ENCODE measurements at regions of chr16 and their contacts with region 1.

Region 1: GRCh38 chr16:68085259-68086071 is at the start of gene NFATC3:
- DNase-seq: peak; percentile 98 to 100 (median 99)
- ATAC-seq: peak; percentile 81
- H3K4me3 ChIP-seq: peak within 1 kb of the TSS; percentile 87 to 97
- H3K4me3 Mint-ChIP-seq: peak within 1 kb of the TSS; percentile 85
- H3K27ac ChIP-seq: peak within 1 kb of the TSS; percentile 72 to 91
- H3K27ac Mint-ChIP-seq: peak within 1 kb of the TSS; percentile 98
- H3K4me1 ChIP-seq: peaks cover 64% of the 10 kb centered on the region
- H3K4me1 Mint-ChIP-seq: peaks cover 64% of the 10 kb centered on the region
- H3K27me3 ChIP-seq: no peaks in the 10 kb centered on the region
- H3K27me3 Mint-ChIP-seq: no peaks in the 10 kb centered on the region
- CTCF ChIP-seq: no peak
- total RNA-seq, gene NFATC3: 79.4 to 85.2 TPM

Region 2: GRCh38 chr16:67833418-67834241 is 251.8 kb before region 1 on chr16:
- CTCF ChIA-PET with region 1: no interaction called
- POLR2A ChIA-PET with region 1: interaction called, 5 read pairs
- intact Hi-C with region 1: loop called in 1 of 2 experiments (anchors 2 kb)
- DNase-seq: peak; percentile 84 to 96 (median 93)
- ATAC-seq: peak; percentile 99
- H3K4me3 ChIP-seq: peak overlapping the region; percentile 73 to 86
- H3K4me3 Mint-ChIP-seq: peak overlapping the region; percentile 94
- H3K27ac ChIP-seq: peak overlapping the region; percentile 52 to 59
- H3K27ac Mint-ChIP-seq: peak overlapping the region; percentile 77
- H3K4me1 ChIP-seq: peaks cover 17% of the 10 kb centered on the region
- H3K4me1 Mint-ChIP-seq: peaks cover 14% of the 10 kb centered on the region
- H3K27me3 ChIP-seq: no peaks in the 10 kb centered on the region
- H3K27me3 Mint-ChIP-seq: no peaks in the 10 kb centered on the region
- CTCF ChIP-seq: no peak

Region 3: GRCh38 chr16:67880584-67880983 is 204.9 kb before region 1 on chr16:
- CTCF ChIA-PET with region 1: no interaction called
- POLR2A ChIA-PET with region 1: no interaction called
- intact Hi-C with region 1: no loop called
- DNase-seq: no peak
- ATAC-seq: no peak
- H3K4me3 ChIP-seq: no peak overlapping the region
- H3K4me3 Mint-ChIP-seq: no peak overlapping the region
- H3K27ac ChIP-seq: no peak overlapping the region
- H3K27ac Mint-ChIP-seq: no peak overlapping the region
- H3K4me1 ChIP-seq: peaks cover 5% of the 10 kb centered on the region
- H3K4me1 Mint-ChIP-seq: peaks cover 7% of the 10 kb centered on the region
- H3K27me3 ChIP-seq: no peaks in the 10 kb centered on the region
- H3K27me3 Mint-ChIP-seq: no peaks in the 10 kb centered on the region
- CTCF ChIP-seq: no peak

Region 4: GRCh38 chr16:67968400-67969253 is 116.8 kb before region 1 on chr16 and contains the start of gene SLC12A4:
- CTCF ChIA-PET with region 1: no interaction called
- POLR2A ChIA-PET with region 1: interaction called, 3 read pairs
- intact Hi-C with region 1: loop called in 1 of 2 experiments (anchors 1 kb)
- DNase-seq: peak; percentile 66 to 93 (median 86)
- ATAC-seq: peak; percentile 90
- H3K4me3 ChIP-seq: peak within 1 kb of the TSS; percentile 78 to 97
- H3K4me3 Mint-ChIP-seq: peak within 1 kb of the TSS; percentile 83
- H3K27ac ChIP-seq: peak within 1 kb of the TSS; percentile 44 to 59
- H3K27ac Mint-ChIP-seq: peak within 1 kb of the TSS; percentile 94
- H3K4me1 ChIP-seq: peaks cover 15% of the 10 kb centered on the region
- H3K4me1 Mint-ChIP-seq: peaks cover 21% of the 10 kb centered on the region
- H3K27me3 ChIP-seq: no peaks in the 10 kb centered on the region
- H3K27me3 Mint-ChIP-seq: no peaks in the 10 kb centered on the region
- CTCF ChIP-seq: no peak
- total RNA-seq, gene SLC12A4: 20.1 to 20.7 TPM

Region 5: GRCh38 chr16:68022704-68023522 is 62.6 kb before region 1 on chr16 and contains the starts of genes DDX28 and DUS2:
- CTCF ChIA-PET with region 1: no interaction called
- POLR2A ChIA-PET with region 1: interaction called, 12 read pairs
- intact Hi-C with region 1: no loop called
- DNase-seq: peak; percentile 89 to 98 (median 94)
- ATAC-seq: peak; percentile 95
- H3K4me3 ChIP-seq: peak within 1 kb of the TSS; percentile 92 to 97
- H3K4me3 Mint-ChIP-seq: peak within 1 kb of the TSS; percentile 98
- H3K27ac ChIP-seq: peak within 1 kb of the TSS; percentile 86 to 88
- H3K27ac Mint-ChIP-seq: peak within 1 kb of the TSS; percentile 95
- H3K4me1 ChIP-seq: peaks cover 28% of the 10 kb centered on the region
- H3K4me1 Mint-ChIP-seq: peaks cover 36% of the 10 kb centered on the region
- H3K27me3 ChIP-seq: no peaks in the 10 kb centered on the region
- H3K27me3 Mint-ChIP-seq: no peaks in the 10 kb centered on the region
- CTCF ChIP-seq: no peak
- total RNA-seq, gene DDX28: 18.5 to 20.9 TPM
- total RNA-seq, gene DUS2: 9.5 TPM

Region 6: GRCh38 chr16:68064791-68065365 is 20.6 kb before region 1 on chr16:
- CTCF ChIA-PET with region 1: interaction called, 51 read pairs
- POLR2A ChIA-PET with region 1: interaction called, 86 read pairs
- intact Hi-C with region 1: loop called (anchors 1 to 2 kb)
- DNase-seq: peak; percentile 39 to 86 (median 73)
- ATAC-seq: peak; percentile 82
- H3K4me3 ChIP-seq: no peak overlapping the region
- H3K4me3 Mint-ChIP-seq: no peak overlapping the region
- H3K27ac ChIP-seq: peak overlapping the region in 1 of 2 experiments; percentile 58
- H3K27ac Mint-ChIP-seq: peak overlapping the region; percentile 92
- H3K4me1 ChIP-seq: peaks cover 72% of the 10 kb centered on the region
- H3K4me1 Mint-ChIP-seq: peaks cover 76% of the 10 kb centered on the region
- H3K27me3 ChIP-seq: no peaks in the 10 kb centered on the region
- H3K27me3 Mint-ChIP-seq: no peaks in the 10 kb centered on the region
- CTCF ChIP-seq: peak; percentile 85

Region 7: GRCh38 chr16:68183046-68183445 is 97.6 kb after region 1 on chr16:
- CTCF ChIA-PET with region 1: no interaction called
- POLR2A ChIA-PET with region 1: no interaction called
- intact Hi-C with region 1: no loop called
- DNase-seq: no peak
- ATAC-seq: no peak
- H3K4me3 ChIP-seq: no peak overlapping the region
- H3K4me3 Mint-ChIP-seq: no peak overlapping the region
- H3K27ac ChIP-seq: no peak overlapping the region
- H3K27ac Mint-ChIP-seq: no peak overlapping the region
- H3K4me1 ChIP-seq: no peaks in the 10 kb centered on the region
- H3K4me1 Mint-ChIP-seq: peaks cover 5% of the 10 kb centered on the region
- H3K27me3 ChIP-seq: no peaks in the 10 kb centered on the region
- H3K27me3 Mint-ChIP-seq: no peaks in the 10 kb centered on the region
- CTCF ChIP-seq: no peak

Region 8: GRCh38 chr16:68310761-68311511 is 225.5 kb after region 1 on chr16 and contains the starts of genes PRMT7 and SLC7A6OS:
- CTCF ChIA-PET with region 1: no interaction called
- POLR2A ChIA-PET with region 1: no interaction called
- intact Hi-C with region 1: loop called (anchors 1 to 2 kb)
- DNase-seq: peak; percentile 77 to 96 (median 92)
- ATAC-seq: peak; percentile 97
- H3K4me3 ChIP-seq: peak within 1 kb of the TSS; percentile 84 to 92
- H3K4me3 Mint-ChIP-seq: peak within 1 kb of the TSS; percentile 97
- H3K27ac ChIP-seq: peak within 1 kb of the TSS; percentile 70 to 81
- H3K27ac Mint-ChIP-seq: peak within 1 kb of the TSS; percentile 98
- H3K4me1 ChIP-seq: peaks cover 46% of the 10 kb centered on the region
- H3K4me1 Mint-ChIP-seq: peaks cover 62% of the 10 kb centered on the region
- H3K27me3 ChIP-seq: no peaks in the 10 kb centered on the region
- H3K27me3 Mint-ChIP-seq: no peaks in the 10 kb centered on the region
- CTCF ChIP-seq: peak; percentile 8
- total RNA-seq, gene PRMT7: 53.8 to 58.7 TPM
- total RNA-seq, gene SLC7A6OS: 39.4 to 44.2 TPM

Region 9: DNA sequence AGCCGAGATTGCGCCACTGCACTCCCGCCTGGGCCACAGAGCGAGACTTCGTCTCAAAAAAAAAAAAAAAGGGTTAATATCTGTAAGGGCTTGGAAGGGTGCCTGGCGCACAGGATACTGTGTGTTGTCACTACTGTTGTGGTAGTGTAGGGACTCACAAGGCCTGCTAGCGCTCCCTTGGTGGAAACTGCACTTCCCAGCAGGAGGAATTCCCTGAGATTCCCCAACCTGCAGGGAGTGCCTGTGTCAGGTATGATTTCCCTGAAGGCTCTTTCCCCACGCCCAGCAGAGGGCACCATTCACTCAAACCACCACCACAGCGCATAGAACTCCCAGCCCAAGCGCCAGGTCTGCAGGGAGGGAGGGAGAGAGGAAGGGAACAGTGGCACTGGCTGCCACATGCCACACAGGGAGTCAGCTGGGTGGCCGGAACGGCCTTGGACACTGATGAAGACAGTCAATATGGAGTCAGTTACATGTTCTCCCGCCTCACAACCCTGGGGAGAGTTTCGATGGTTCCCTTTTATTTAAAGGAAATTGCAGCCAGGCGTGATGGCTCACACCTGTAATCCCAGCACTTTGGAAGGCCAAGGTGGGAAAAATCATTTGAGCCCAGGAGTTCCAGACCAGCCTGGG is 618.9 kb after region 1 on chr16:
- CTCF ChIA-PET with region 1: no interaction called
- POLR2A ChIA-PET with region 1: no interaction called
- intact Hi-C with region 1: no loop called
- DNase-seq: peak; percentile 5 to 68 (median 49)
- ATAC-seq: peak; percentile 49
- H3K4me3 ChIP-seq: no peak overlapping the region
- H3K4me3 Mint-ChIP-seq: no peak overlapping the region
- H3K27ac ChIP-seq: no peak overlapping the region
- H3K27ac Mint-ChIP-seq: no peak overlapping the region
- H3K4me1 ChIP-seq: no peaks in the 10 kb centered on the region
- H3K4me1 Mint-ChIP-seq: peaks cover 2% of the 10 kb centered on the region
- H3K27me3 ChIP-seq: no peaks in the 10 kb centered on the region
- H3K27me3 Mint-ChIP-seq: no peaks in the 10 kb centered on the region
- CTCF ChIP-seq: peak; percentile 53